Endothelial cell of umbilical vein (primary cell): ENCODE measurements at regions of chr14 and their contacts with region 1.

Region 1: GRCh38 chr14:84006643-84007155 is 1523.2 kb upstream of the FLRT2 start:
- DNase-seq: peak; percentile 96
- H3K4me3 ChIP-seq: no peak overlapping the region
- H3K27ac ChIP-seq: peak overlapping the region; percentile 61
- H3K4me1 ChIP-seq: peaks cover 10% of the 10 kb centered on the region
- H3K27me3 ChIP-seq: no peaks in the 10 kb centered on the region
- CTCF ChIP-seq: peak; percentile 10 to 11
- POLR2A ChIP-seq: no peak

Region 2: DNA sequence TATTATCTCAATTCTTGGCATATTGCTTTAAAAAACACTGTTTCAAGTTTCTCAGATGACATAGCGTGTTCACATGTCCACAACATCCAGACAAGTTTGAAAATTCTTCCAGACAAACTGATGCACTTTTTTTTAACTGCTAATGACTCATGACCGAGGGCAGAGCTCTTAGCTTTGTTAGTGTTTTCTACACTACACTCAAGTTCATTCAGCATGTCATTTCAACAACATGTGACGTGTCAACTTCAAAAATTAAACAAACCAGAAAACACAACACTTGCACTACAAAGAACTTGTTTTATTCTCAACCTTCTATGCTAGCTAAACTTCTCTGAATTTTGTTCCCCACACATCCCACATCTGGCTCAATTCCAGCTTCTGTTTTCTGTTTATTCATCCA is 337.0 kb after region 1 on chr14:
- CTCF ChIA-PET with region 1: no interaction called
- POLR2A ChIA-PET with region 1: no interaction called
- dilution Hi-C with region 1: no loop called
- intact Hi-C with region 1: loop called (anchors 5 kb)
- DNase-seq: peak; percentile 92
- H3K4me3 ChIP-seq: no peak overlapping the region
- H3K27ac ChIP-seq: peak overlapping the region; percentile 58
- H3K4me1 ChIP-seq: peaks cover 21% of the 10 kb centered on the region
- H3K27me3 ChIP-seq: no peaks in the 10 kb centered on the region
- CTCF ChIP-seq: no peak
- POLR2A ChIP-seq: no peak

Region 3: DNA sequence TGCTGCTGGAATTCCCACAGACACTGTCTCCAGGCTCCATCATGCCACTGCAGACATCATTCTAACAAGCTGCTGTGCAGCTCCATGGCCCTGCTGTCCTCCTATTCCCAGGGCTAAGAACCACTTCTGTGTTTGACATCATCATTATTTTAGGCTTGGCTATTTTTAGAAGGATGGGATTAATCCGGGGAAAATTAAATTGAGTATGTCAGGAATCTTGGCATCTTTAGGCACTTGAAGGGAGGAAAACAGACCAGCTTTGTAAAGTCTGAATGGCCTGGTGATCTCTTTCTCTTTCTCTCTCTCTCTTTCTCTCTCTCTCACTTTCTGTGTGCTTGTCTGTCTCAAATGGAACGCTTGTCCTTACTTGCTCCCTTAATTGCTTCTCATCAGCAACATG is 954.9 kb after region 1 on chr14:
- CTCF ChIA-PET with region 1: no interaction called
- POLR2A ChIA-PET with region 1: no interaction called
- dilution Hi-C with region 1: no loop called
- intact Hi-C with region 1: loop called (anchors 1 kb)
- DNase-seq: no peak
- H3K4me3 ChIP-seq: no peak overlapping the region
- H3K27ac ChIP-seq: no peak overlapping the region
- H3K4me1 ChIP-seq: peaks cover 35% of the 10 kb centered on the region
- H3K27me3 ChIP-seq: no peaks in the 10 kb centered on the region
- CTCF ChIP-seq: no peak
- POLR2A ChIP-seq: no peak

Region 4: GRCh38 chr14:85333313-85333712 is 1326.6 kb after region 1 on chr14:
- CTCF ChIA-PET with region 1: no interaction called
- POLR2A ChIA-PET with region 1: no interaction called
- dilution Hi-C with region 1: no loop called
- intact Hi-C with region 1: loop called (anchors 10 kb)
- DNase-seq: peak; percentile 67
- H3K4me3 ChIP-seq: no peak overlapping the region
- H3K27ac ChIP-seq: no peak overlapping the region
- H3K4me1 ChIP-seq: peaks cover 14% of the 10 kb centered on the region
- H3K27me3 ChIP-seq: no peaks in the 10 kb centered on the region
- CTCF ChIP-seq: no peak
- POLR2A ChIP-seq: no peak

Region 5: GRCh38 chr14:85607651-85608081 is 1601.0 kb after region 1 on chr14:
- CTCF ChIA-PET with region 1: no interaction called
- POLR2A ChIA-PET with region 1: no interaction called
- dilution Hi-C with region 1: no loop called
- intact Hi-C with region 1: loop called (anchors 1 kb)
- DNase-seq: peak; percentile 47
- H3K4me3 ChIP-seq: no peak overlapping the region
- H3K27ac ChIP-seq: no peak overlapping the region
- H3K4me1 ChIP-seq: no peaks in the 10 kb centered on the region
- H3K27me3 ChIP-seq: no peaks in the 10 kb centered on the region
- CTCF ChIP-seq: no peak
- POLR2A ChIP-seq: no peak